BJ (cell line): ENCODE measurements at regions of chr1 and their contacts with region 1.

Region 1: DNA sequence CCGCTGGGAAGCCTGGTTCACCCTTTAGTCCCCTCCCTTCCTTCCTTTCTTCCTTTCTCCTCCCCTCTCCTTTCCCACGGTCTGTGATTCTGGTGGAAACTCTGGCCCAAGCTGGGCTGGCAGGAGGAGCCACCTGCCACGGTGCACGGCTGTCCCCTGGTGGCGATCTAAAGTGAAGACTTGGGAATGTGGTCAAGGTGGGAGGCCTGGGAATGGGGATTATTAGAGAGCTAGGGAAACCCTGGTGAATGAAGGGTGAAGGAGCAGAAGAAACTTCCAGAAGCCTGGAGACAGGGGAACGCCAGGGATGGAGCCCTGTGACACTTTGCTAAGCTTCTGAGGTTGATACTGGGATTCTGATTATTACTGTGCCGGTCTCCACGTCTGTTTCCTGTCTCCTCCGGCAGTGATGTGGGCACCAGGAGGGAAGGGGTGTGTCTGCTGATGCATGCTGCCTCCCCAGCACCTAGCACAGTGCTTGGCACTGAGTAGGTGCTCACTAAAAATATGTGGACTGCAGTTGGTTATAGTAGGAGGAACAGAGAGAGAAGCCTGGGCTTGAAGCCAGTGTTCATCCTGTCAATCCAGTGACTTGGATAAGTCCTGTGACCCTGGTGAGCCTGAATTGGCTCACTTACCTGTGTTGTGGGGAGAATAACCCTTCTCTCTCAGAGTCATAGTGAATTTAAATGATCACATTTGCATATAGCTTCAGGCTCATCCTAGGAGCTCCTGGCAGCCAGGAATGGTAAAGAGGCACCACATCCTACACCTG is 71.2 kb upstream of the NBPF3 start:
- DNase-seq: peak; percentile 24
- H3K4me3 ChIP-seq: no peak overlapping the region
- H3K27me3 ChIP-seq: no peaks in the 10 kb centered on the region
- CTCF ChIP-seq: peak; percentile 100

Region 2: DNA sequence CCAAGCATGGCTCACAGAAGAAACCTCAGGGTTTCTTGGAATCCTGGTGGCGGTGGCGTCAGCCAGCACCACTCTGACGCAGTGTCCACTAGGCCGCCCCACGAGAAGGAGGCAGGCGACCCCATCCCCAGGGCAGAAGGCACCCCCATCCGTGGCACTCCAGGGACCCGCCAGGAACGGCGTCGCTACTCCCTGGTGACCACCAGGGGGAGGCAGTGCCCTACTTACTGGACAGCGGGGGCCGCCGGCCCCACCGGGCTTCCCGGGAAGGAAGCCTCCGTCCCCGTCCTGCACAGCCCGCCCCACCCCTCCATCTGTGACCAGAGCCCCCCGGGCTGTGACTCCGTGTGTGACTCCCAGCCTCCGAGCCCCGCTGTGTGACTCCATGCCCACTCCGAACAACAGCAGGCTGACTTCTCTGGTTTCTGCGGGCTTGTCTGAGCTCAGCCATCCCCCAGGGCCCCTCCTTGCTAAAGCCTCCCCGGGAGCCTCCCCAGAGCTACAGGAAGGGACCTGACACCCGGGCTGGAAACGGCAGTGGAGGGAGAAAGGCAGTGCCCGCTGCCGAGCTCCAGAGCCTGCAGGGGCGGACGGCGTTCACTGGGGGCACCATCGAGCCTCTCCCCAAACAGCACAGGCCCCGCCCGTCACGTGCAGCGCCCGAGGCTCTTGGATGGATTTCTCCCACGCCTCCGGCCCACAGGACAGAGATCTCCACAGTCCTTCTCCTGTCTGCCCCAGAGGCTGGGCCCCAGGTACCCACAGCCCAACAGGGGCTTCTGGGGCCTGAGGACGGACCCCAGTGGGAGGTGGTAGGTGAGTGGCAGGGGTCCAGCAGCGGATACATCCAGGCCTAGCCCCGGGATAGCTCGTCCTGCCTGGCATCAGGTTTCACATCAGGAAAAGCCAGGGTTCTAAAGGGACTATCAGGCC is 672.0 kb before region 1 on chr1:
- CTCF ChIA-PET with region 1: interaction called, 19 read pairs
- POLR2A ChIA-PET with region 1: no interaction called
- DNase-seq: peak; percentile 76
- H3K4me3 ChIP-seq: peak overlapping the region; percentile 48
- H3K27me3 ChIP-seq: no peaks in the 10 kb centered on the region
- CTCF ChIP-seq: peak; percentile 89

Region 3: GRCh38 chr1:20932437-20932977 is 436.2 kb before region 1 on chr1:
- CTCF ChIA-PET with region 1: no interaction called
- POLR2A ChIA-PET with region 1: no interaction called
- DNase-seq: no peak
- H3K4me3 ChIP-seq: no peak overlapping the region
- H3K27me3 ChIP-seq: no peaks in the 10 kb centered on the region
- CTCF ChIP-seq: no peak

Region 4: DNA sequence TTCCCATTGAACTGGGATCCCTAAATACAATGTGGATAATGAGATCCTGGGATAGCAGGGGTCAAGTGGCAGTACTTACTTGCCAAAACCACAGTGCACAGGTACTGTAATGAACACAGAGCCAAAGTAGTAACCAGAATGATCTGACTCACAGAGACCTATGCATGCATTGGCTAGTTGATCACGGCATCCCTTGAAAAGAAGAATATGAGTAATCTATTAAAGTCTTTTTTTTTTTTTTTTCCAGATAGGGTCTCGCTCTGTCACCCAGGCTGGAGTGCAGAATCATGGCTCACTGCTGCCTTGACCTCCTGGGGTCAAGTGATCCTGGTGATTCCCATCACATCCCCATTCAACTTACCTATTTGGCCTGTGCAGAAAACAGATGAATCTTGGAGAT is 162.6 kb before region 1 on chr1:
- CTCF ChIA-PET with region 1: no interaction called
- POLR2A ChIA-PET with region 1: no interaction called
- DNase-seq: no peak
- H3K4me3 ChIP-seq: no peak overlapping the region
- H3K27me3 ChIP-seq: no peaks in the 10 kb centered on the region
- CTCF ChIP-seq: no peak

Region 5: GRCh38 chr1:21232044-21232443 is 136.7 kb before region 1 on chr1:
- CTCF ChIA-PET with region 1: interaction called, 162 read pairs
- POLR2A ChIA-PET with region 1: no interaction called
- DNase-seq: no peak
- H3K4me3 ChIP-seq: no peak overlapping the region
- H3K27me3 ChIP-seq: no peaks in the 10 kb centered on the region
- CTCF ChIP-seq: peak; percentile 65

Region 6: GRCh38 chr1:21261551-21262281 is 107.0 kb before region 1 on chr1:
- CTCF ChIA-PET with region 1: interaction called, 178 read pairs
- POLR2A ChIA-PET with region 1: no interaction called
- DNase-seq: peak; percentile 88
- H3K4me3 ChIP-seq: no peak overlapping the region
- H3K27me3 ChIP-seq: no peaks in the 10 kb centered on the region
- CTCF ChIP-seq: no peak

Region 7: DNA sequence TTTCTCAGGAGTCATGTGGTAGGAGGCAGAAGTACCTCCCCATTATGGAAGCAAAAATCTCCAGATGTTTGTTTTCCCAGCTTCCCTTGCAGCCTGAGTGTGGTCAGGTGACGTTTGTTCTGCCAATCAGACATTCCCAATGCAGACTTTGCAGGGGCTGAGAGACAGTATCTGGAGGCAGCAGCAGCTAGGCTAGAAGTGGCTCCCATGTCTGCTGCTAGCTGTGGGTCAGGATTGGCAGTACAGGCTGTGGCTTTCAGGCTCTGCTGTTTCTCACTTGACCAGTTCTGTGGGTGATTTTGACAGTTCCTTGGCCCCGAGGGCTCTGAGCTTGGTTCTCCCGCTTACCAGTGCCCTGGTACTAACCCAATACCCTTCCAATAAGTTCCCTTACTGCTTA is 12.7 kb after region 1 on chr1:
- CTCF ChIA-PET with region 1: interaction called, 19 read pairs
- POLR2A ChIA-PET with region 1: no interaction called
- DNase-seq: no peak
- H3K4me3 ChIP-seq: no peak overlapping the region
- H3K27me3 ChIP-seq: peaks cover 5% of the 10 kb centered on the region
- CTCF ChIP-seq: no peak

Region 8: GRCh38 chr1:21499283-21499950 is 130.7 kb after region 1 on chr1:
- CTCF ChIA-PET with region 1: interaction called, 19 read pairs
- POLR2A ChIA-PET with region 1: no interaction called
- DNase-seq: no peak
- H3K4me3 ChIP-seq: no peak overlapping the region
- H3K27me3 ChIP-seq: peaks cover 11% of the 10 kb centered on the region
- CTCF ChIP-seq: no peak

Region 9: DNA sequence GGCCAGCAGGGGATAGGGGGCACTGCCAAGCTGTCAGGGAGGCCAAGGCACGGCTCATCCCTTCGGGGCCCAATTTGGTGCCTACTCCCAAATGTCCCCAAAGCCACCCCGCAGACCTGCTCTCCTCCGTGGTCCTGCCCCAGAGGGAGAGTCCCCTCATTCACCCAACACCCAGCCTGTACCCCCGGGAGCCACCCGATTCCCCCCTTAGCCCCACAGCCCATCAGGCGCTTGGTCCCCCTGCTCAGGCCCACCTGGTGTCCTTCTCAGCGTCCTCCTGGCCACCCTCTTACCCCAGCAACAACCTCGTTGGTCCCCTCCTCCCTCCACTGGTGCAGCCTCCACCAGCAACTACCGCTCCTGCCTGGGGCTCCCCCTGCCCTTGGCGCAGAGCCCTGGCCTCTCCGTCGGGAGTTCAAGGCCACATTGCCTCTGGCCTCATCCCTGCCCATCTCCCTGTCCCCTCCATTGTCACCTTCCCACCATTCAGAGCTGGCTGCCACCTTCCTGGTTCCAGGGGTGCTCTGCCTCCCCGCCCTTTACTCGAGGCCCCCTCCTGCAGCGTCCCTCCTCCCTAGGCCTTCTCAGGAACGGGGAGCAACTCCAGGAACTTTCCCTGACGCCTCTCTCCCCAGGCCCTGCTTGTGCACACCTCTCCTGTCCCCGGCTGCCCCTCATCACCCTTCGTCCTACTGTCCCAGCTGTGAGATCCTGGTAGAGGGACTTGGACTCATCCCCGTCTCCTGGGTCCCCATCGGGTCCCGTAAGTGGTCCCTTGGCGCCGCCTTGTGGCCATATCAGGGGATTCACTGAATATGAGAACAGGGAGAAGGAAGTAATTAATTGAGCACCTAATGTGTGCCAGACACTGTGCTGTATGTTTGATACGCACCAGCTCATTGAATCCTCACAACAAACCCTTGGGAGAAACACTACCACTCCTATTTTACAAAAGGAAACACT is 226.5 kb after region 1 on chr1:
- CTCF ChIA-PET with region 1: interaction called, 51 read pairs
- POLR2A ChIA-PET with region 1: no interaction called
- DNase-seq: no peak
- H3K4me3 ChIP-seq: no peak overlapping the region
- H3K27me3 ChIP-seq: peaks cover 6% of the 10 kb centered on the region
- CTCF ChIP-seq: peak; percentile 81